Activated CD8-positive, alpha-beta T cell treated with anti-CD3 and anti-CD28 coated beads, Interleukin-2, amount 10 ng/mL, durations not matched to agents 7 days and 5 days (primary cell): ENCODE measurements at regions of chr12 and their contacts with region 1.

Region 1: DNA sequence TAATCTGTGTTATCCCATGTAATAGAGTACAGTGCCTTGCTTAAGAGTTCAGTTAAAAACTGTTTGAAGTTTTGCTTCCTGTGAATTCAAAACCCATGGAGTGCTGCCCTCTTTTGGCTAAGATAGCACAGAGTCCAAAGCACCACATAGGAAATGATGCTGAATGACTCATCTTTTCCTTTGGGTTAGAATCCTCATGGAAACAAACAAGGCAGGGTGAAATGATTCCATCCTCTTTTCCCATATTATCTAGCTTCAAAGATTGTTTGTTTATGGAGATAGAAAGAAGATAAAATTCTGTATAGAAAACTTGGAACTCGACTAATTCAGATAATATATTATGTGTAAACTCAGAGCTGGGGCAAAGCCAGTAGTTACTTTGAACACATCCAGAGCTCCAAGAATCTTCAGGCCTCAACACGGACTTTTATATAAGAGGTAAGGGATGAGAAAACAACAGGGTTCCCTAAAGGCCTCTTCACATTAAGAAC is 87.4 kb downstream of the OTOGL start:
- DNase-seq: peak; percentile 52
- ATAC-seq: peak; percentile 73
- H3K4me3 Mint-ChIP-seq: no peak overlapping the region
- H3K27ac Mint-ChIP-seq: no peak overlapping the region
- H3K4me1 Mint-ChIP-seq: no peaks in the 10 kb centered on the region
- H3K27me3 Mint-ChIP-seq: peaks cover 2% of the 10 kb centered on the region

Region 2: GRCh38 chr12:79886917-79887519 is 299.8 kb before region 1 on chr12:
- CTCF ChIA-PET with region 1: interaction called, 20 read pairs
- POLR2A ChIA-PET with region 1: no interaction called
- DNase-seq: no peak
- ATAC-seq: peak; percentile 92
- H3K4me3 Mint-ChIP-seq: no peak overlapping the region
- H3K27ac Mint-ChIP-seq: no peak overlapping the region
- H3K4me1 Mint-ChIP-seq: peaks cover 31% of the 10 kb centered on the region
- H3K27me3 Mint-ChIP-seq: no peaks in the 10 kb centered on the region

Region 3: GRCh38 chr12:80217011-80217535 is 30.3 kb after region 1 on chr12:
- CTCF ChIA-PET with region 1: no interaction called
- POLR2A ChIA-PET with region 1: no interaction called
- DNase-seq: no peak
- ATAC-seq: no peak
- H3K4me3 Mint-ChIP-seq: no peak overlapping the region
- H3K27ac Mint-ChIP-seq: no peak overlapping the region
- H3K4me1 Mint-ChIP-seq: no peaks in the 10 kb centered on the region
- H3K27me3 Mint-ChIP-seq: no peaks in the 10 kb centered on the region